ENCODE measurements at regions of chr5 and their contacts with region 1.

Region 1: GRCh38 chr5:5266296-5266695 is 126.2 kb downstream of the ADAMTS16 start:
- DNase-seq: no peak

Region 2: DNA sequence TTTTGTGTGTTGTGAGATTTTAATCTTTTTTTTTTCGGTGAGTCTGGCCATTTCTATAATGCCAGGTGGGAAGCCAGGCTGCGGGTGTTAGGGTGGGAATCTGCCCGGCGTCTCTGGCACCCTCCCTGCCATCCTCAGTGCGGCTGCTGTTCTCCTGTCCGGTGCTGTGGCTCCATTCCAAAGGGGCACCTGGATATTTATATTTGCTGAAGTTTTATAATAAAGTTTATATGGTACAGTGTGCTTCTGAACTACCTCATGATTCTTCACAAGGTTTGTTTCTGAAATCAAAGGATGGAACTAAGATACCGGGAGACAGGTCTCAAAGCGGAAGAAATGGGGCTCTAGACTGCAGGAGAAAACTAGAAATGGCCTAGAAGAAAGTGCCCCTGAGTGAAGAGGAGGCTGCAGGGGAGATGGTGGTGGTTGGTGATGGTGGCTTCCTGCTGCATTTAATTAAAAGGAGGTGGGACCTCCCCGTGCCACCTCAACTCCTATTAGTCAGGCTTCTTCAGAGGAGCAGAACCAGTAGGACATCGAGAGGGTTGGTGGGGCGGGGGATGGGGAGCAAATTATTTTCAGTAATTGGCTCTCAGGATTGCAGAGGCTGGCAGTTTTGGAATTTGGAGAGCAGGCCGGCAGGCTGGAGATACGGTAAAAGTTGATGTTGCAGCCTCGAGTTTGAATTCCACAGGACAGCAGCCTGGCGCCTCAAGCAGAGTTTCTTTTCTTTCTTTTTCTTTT is 53.9 kb after region 1 on chr5:
- intact Hi-C with region 1: loop called (anchors 5 kb)
- DNase-seq: peak; percentile 35

Region 3: DNA sequence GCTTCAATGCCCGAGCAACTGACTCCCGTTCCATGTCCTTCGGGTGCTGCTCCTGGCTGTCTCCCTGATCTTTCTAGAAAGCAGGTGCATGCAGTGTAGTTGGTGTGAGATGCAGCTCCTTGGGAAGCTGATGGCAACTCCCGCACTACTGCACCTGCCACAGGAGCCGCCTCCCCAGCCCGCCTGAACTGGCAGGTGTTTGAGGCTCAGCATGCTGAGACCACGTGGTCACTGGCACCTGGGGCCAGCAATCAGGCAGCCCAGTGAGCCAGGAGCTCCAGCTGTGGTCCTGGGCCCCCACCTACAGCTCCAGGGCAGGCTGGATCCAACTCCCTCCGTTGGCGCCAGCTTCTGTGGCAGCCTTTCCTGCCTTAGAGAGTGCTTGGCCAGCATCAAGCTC is 267.6 kb after region 1 on chr5:
- intact Hi-C with region 1: no loop called
- DNase-seq: no peak